ENCODE measurements at regions of chr6 and their contacts with region 1.

Region 1: DNA sequence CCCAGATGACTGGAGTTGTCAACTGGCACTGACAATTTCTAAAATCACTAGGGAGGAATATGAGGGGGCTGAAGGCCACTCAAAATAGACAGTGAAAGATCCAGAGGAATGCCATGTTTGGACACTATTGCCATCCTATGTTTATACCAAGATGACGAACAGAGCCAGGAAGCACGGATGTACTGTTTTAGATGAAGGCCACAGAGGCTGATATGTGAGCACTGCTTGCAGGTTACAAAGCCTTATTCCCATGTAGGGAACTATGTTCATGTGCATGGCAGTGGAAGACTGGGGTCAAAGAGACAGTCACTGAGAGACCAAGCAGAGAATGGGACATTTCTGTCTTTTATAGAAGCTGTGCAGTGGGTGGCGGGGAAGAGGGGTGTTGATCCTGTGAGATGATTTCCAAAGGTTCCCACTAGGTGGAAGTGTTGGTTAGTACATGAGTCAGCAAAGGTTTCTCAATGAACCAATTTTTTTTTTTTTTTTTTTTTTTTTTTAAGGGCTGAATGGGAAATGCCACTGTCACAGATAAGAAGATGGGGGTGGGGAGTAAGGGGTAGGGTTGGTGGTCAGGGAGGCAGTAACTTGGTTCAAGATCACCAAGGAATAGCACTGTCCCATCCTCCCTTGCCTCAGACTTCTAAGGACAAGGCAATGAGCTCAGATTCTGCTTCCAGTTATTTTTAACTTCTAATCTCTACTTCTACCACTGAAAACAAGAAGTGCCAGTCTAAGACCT is 46.7 kb upstream of the MOCS1 start:
- DNase-seq: peak; percentile 31 to 55 (median 38)
- H3K4me3 ChIP-seq: no peak overlapping the region
- H3K27ac ChIP-seq: peak overlapping the region in 2 of 5 donors; percentile 12 to 33
- H3K4me1 ChIP-seq: peaks cover 0 to 5% of the 10 kb centered on the region in 2 donors
- H3K27me3 ChIP-seq: no peaks in the 10 kb centered on the region
- CTCF ChIP-seq: peak; percentile 19 to 85 (median 62)
- POLR2A ChIP-seq: no peak

Region 2: DNA sequence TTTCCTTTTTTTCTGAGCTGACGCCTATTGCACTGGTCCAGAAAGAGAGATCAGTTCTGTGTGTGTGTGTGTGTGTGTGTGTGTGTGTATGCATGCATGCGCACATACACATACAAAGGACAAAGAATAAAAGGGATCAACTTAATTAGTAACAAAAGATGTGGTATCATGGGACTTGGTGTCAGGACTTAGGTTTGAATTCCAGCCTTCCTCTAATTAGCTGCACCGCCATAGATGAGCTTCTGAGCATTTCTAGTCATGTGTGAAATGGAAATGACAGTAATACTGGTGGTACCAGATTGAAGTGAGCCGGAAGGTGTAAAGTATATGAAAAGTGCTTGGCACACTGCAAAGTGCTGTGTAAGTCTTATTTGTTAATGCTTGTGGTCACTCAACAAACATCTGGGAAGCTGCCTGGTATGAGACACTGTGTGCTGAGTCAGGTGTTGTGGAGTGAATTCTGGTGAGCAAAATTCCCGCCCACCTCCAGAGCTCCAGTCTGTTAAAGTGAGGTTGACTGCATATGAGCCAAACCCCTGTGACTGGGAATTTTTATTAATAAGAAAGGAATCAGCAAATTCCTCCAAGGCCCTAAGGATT is 176.4 kb before region 1 on chr6:
- intact Hi-C with region 1: no loop called
- DNase-seq: no peak
- H3K4me3 ChIP-seq: no peak overlapping the region
- H3K27ac ChIP-seq: peak overlapping the region in 1 of 5 donors; percentile 45
- H3K4me1 ChIP-seq: peaks cover 4 to 44% of the 10 kb centered on the region in 2 donors
- H3K27me3 ChIP-seq: no peaks in the 10 kb centered on the region
- CTCF ChIP-seq: no peak
- POLR2A ChIP-seq: no peak

Region 3: DNA sequence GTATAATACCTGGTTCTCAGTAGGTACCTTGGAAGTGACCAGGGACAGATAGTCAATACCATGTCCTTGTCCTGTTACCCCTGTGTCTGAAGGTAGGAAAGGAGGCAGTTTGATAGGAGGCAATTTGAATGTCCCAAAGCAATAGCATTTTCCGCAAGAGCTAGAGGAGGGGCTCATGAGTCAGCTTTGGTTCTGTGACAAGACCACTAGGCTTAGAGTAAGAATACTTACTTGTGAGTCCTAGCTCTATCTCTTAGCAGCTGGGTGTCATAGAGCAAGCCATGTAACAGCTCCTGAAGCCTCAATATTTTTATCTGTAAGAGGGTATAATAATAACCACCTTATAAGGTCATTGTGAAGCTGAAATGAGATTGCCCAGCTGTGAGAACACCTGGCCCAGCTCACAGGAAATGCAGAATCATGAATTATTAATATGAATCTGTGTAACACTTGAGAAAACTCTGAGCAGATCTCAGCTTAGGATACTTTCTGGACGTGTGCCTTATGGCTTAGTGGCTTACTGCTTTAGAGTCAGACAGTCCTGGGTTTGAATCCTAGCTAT is 130.2 kb before region 1 on chr6:
- intact Hi-C with region 1: no loop called
- DNase-seq: no peak
- H3K4me3 ChIP-seq: no peak overlapping the region
- H3K27ac ChIP-seq: peak overlapping the region in 2 of 5 donors; percentile 47 to 69
- H3K4me1 ChIP-seq: peaks cover 9 to 81% of the 10 kb centered on the region in 2 donors
- H3K27me3 ChIP-seq: no peaks in the 10 kb centered on the region
- CTCF ChIP-seq: no peak
- POLR2A ChIP-seq: no peak

Region 4: GRCh38 chr6:40251637-40252300 is 270.8 kb after region 1 on chr6:
- intact Hi-C with region 1: no loop called
- DNase-seq: no peak
- H3K4me3 ChIP-seq: no peak overlapping the region
- H3K27ac ChIP-seq: no peak overlapping the region
- H3K4me1 ChIP-seq: no peaks in the 10 kb centered on the region
- H3K27me3 ChIP-seq: no peaks in the 10 kb centered on the region
- CTCF ChIP-seq: no peak
- POLR2A ChIP-seq: no peak

Region 5: DNA sequence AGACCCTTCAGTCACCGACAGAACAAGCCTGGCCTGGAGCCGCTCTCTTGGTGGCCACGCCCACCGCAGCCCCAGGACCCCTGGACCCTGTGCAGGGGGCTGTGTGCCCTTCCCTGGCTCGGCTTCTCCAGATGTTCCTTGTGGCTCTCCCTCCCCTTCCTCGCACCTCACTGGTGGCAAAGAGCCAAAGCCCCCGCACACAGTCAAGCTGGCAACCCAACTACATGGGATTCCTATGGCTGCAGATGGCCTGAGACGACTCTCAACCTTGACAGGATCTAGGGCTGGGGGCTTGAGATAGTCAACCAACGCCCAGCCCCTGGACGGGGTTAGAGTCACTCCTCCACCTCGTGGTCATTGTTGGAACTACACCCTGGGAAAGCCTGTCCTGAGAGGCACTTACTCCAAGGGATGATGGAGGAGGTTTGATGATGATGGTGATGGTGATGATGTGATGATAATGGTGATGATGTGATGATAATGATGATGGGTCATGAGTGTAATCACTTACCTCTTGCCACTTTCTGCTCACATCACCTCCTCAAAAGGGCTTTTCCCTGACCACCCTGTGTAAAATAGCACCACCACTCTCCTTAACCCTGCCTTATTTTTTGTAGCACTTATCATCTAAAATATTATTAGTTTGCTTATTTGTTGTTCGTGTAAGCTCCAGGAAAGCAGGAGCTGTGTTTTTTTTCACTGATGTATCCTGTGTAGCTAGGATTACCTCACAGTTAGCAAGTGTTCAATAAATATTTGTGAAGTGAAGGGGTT is 327.7 kb after region 1 on chr6:
- intact Hi-C with region 1: loop called (anchors 2 to 10 kb)
- DNase-seq: peak; percentile 53 to 79 (median 71)
- H3K4me3 ChIP-seq: no peak overlapping the region
- H3K27ac ChIP-seq: no peak overlapping the region
- H3K4me1 ChIP-seq: no peaks in the 10 kb centered on the region
- H3K27me3 ChIP-seq: peaks cover 8% of the 10 kb centered on the region
- CTCF ChIP-seq: peak; percentile 85 to 97 (median 93)
- POLR2A ChIP-seq: no peak

Region 6: GRCh38 chr6:40822619-40823018 is 841.6 kb after region 1 on chr6:
- intact Hi-C with region 1: loop called in 1 of 2 experiments (anchors 10 kb)
- DNase-seq: no peak
- H3K4me3 ChIP-seq: no peak overlapping the region
- H3K27ac ChIP-seq: no peak overlapping the region
- H3K4me1 ChIP-seq: no peaks in the 10 kb centered on the region
- H3K27me3 ChIP-seq: peaks cover 3% of the 10 kb centered on the region
- CTCF ChIP-seq: no peak
- POLR2A ChIP-seq: no peak

Region 7: DNA sequence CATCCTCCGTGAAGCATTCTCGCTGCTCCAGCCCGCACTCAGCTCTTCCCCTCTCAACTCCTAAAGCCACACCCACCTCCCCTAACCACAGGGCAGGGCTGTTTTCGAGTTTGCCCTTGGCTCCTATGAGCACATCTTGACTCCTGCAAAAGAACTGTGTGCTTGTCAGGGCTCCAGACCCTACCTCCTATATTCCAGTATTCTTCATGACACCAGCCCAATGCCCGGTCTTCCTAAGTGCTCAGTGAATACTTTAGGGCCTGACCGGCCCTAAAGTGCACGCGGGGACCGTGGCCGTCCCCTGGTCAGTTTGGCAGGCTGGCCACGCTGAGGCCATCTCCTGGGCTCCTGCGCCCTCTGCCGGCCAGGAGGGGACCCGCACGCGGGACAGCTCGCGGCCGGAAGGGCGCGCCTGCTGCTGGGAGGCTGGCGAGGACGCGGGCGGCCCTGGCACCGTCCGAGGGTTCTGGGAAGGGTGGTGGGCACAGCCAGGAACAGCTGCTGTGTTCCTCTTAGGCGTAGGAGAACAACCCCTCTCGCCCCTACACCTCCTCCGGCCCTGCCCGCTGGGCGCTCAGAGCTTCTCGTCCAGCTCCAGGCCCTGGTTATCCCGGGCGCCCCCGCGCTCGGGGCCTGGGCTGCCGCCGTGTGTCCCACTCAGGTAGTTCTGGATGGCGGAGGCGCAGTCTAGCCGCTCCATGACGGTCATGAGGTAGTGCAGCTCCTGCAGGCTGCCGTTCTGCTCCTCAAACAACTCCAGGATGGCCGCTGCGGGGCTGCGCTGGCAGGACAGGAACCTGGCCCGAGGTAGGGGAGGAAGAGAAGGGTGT is 1047.0 kb after region 1 on chr6:
- intact Hi-C with region 1: loop called in 1 of 2 experiments (anchors 10 kb)
- DNase-seq: peak; percentile 70 to 90 (median 86)
- H3K4me3 ChIP-seq: peak overlapping the region in 2 of 4 donors; percentile 20 to 48
- H3K27ac ChIP-seq: peak overlapping the region in 2 of 5 donors; percentile 51 to 52
- H3K4me1 ChIP-seq: peaks cover 6 to 15% of the 10 kb centered on the region in 2 donors
- H3K27me3 ChIP-seq: no peaks in the 10 kb centered on the region
- CTCF ChIP-seq: peak; percentile 94 to 100 (median 98)
- POLR2A ChIP-seq: peak in 1 of 2 donors; percentile 9